ENCODE measurements at regions of chr12 and their contacts with region 1.

Region 1: DNA sequence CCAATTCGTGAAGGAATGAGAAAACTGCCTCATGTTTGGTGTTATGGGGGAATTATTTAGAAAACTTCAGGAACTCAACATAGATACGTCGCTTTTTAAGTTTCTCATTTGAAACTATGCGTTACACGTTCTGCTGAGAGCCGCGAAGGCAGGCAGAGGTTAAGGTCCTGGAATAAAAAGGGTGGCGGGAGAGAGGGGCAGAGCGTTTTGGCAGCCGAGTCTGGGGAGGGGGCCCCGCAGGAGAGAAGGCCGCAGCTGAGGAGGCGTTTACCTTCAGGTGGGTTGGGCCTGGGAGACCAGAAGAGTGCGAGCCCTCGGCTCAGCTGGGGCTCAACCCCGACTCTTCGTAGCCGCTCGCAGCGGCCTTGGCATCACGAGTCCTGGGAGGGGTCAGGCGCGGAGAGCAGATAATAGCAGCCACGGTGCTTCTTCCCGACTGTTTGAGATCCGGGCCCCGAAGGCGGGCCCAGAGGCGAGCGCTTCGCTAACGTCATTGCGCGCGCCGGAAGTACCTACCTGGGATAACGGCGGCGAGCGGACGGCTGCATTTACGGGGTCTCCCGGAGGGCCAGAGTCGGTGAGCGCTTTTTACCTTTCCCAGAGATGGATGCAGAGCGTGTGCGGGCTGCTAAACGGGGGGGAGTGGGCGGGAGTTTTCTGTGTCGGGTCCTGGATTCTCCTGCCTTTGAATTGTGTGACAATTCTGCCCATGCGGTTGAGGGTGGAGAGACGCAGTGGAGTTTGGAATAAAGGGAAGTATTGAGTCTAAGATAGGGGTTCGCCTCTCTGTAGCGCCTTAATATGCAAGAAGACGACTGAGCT is at the starts of genes PPHLN1 and ZCRB1:
- DNase-seq: peak; percentile 61 to 79 (median 74)
- ATAC-seq: peak; percentile 94
- H3K4me3 ChIP-seq: peak within 1 kb of the TSS; percentile 69
- H3K4me3 Mint-ChIP-seq: peak within 1 kb of the TSS; percentile 92 to 100 (median 98)
- H3K27ac ChIP-seq: peak within 1 kb of the TSS; percentile 80
- H3K27ac Mint-ChIP-seq: peak within 1 kb of the TSS; percentile 93 to 99 (median 97)
- H3K4me1 ChIP-seq: peaks cover 15 to 20% of the 10 kb centered on the region in 2 donors
- H3K4me1 Mint-ChIP-seq: peaks cover 33 to 57% (median 50%) of the 10 kb centered on the region in 7 donors
- H3K27me3 ChIP-seq: no peaks in the 10 kb centered on the region
- H3K27me3 Mint-ChIP-seq: no peaks in the 10 kb centered on the region
- total RNA-seq, gene PPHLN1: 89.1 to 97.6 (median 90.2) TPM
- total RNA-seq, gene ZCRB1: 20.3 to 47.5 (median 23.8) TPM

Region 2: DNA sequence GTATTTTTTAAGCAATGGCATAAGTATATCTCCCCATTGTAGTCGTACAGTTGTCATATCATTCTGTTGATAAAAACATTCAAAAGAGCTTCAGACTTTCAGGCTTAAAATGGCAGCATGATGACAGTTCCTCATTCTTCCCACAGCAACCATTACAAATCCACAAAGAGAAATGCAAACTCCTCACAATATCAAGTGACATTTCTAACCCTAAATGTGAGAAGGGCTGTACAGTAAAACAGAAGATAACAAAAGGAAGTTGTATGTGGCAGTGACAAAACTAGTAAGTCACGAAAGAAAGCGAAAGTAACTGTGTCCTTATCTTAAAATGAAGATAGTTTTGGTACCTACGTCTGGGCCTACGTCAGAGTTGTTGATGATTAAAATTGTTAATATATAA is 227.9 kb before region 1 on chr12:
- CTCF ChIA-PET with region 1: no interaction called
- POLR2A ChIA-PET with region 1: interaction called, 3 read pairs
- intact Hi-C with region 1: loop called in 1 of 2 experiments (anchors 1 kb)
- DNase-seq: peak in 7 of 9 donors; percentile 56 to 79 (median 68)
- ATAC-seq: peak; percentile 94
- H3K4me3 ChIP-seq: peak overlapping the region; percentile 48
- H3K4me3 Mint-ChIP-seq: peak overlapping the region; percentile 84 to 97 (median 90)
- H3K27ac ChIP-seq: peak overlapping the region; percentile 82
- H3K27ac Mint-ChIP-seq: peak overlapping the region; percentile 92 to 100 (median 97)
- H3K4me1 ChIP-seq: peaks cover 24 to 31% of the 10 kb centered on the region in 2 donors
- H3K4me1 Mint-ChIP-seq: peaks cover 33 to 48% (median 43%) of the 10 kb centered on the region in 7 donors
- H3K27me3 ChIP-seq: no peaks in the 10 kb centered on the region
- H3K27me3 Mint-ChIP-seq: no peaks in the 10 kb centered on the region